PC-9 (cell line): ENCODE measurements at regions of chr12 and their contacts with region 1.

Region 1: GRCh38 chr12:119980242-119980641 is 8.8 kb upstream of the BICDL1 start:
- DNase-seq: no peak
- H3K4me3 ChIP-seq: no peak overlapping the region
- H3K27ac ChIP-seq: no peak overlapping the region
- H3K4me1 ChIP-seq: no peaks in the 10 kb centered on the region
- H3K27me3 ChIP-seq: no peaks in the 10 kb centered on the region
- CTCF ChIP-seq: no peak

Region 2: DNA sequence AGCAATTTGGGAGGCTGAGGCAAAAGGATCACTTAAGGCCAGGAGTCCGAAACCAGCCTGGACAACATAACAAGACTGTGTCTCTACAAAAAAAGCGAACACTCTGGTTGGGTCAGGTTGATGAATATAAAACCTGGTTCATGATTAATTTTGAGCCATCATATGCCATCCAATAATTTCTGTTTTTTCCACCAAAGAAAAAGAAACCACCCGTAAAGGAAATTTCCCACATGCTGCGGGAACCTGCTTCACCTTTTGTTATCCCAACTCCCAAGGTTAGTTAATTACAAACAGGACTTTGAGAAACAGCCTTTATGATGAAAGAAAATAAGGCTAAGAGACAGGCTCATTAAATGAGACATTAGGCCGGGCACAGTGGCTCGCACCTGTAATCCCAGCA is 15.3 kb before region 1 on chr12:
- CTCF ChIA-PET with region 1: interaction called, 11 read pairs
- POLR2A ChIA-PET with region 1: no interaction called
- intact Hi-C with region 1: no loop called
- DNase-seq: no peak
- H3K4me3 ChIP-seq: no peak overlapping the region
- H3K27ac ChIP-seq: no peak overlapping the region
- H3K4me1 ChIP-seq: peaks cover 4% of the 10 kb centered on the region; the same call in 1 of the 2 replicates
- H3K27me3 ChIP-seq: no peaks in the 10 kb centered on the region
- CTCF ChIP-seq: no peak